CD8-positive, alpha-beta T cell (primary cell): ENCODE measurements at regions of chr7 and their contacts with region 1.

Region 1: GRCh38 chr7:27160546-27161213 is 4.2 kb upstream of the HOXA7 start:
- DNase-seq: peak; percentile 70 to 93 (median 87)
- ATAC-seq: peak; percentile 87
- H3K4me3 ChIP-seq: peak overlapping the region; percentile 63 to 79
- H3K4me3 Mint-ChIP-seq: peak overlapping the region; percentile 80
- H3K27ac ChIP-seq: no peak overlapping the region
- H3K27ac Mint-ChIP-seq: no peak overlapping the region
- H3K4me1 ChIP-seq: peaks cover 31% of the 10 kb centered on the region
- H3K4me1 Mint-ChIP-seq: peaks cover 41% of the 10 kb centered on the region
- H3K27me3 ChIP-seq: peaks cover 52 to 70% of the 10 kb centered on the region in 2 experiments
- H3K27me3 Mint-ChIP-seq: peaks cover 77% of the 10 kb centered on the region
- CTCF ChIP-seq: peak; percentile 97

Region 2: DNA sequence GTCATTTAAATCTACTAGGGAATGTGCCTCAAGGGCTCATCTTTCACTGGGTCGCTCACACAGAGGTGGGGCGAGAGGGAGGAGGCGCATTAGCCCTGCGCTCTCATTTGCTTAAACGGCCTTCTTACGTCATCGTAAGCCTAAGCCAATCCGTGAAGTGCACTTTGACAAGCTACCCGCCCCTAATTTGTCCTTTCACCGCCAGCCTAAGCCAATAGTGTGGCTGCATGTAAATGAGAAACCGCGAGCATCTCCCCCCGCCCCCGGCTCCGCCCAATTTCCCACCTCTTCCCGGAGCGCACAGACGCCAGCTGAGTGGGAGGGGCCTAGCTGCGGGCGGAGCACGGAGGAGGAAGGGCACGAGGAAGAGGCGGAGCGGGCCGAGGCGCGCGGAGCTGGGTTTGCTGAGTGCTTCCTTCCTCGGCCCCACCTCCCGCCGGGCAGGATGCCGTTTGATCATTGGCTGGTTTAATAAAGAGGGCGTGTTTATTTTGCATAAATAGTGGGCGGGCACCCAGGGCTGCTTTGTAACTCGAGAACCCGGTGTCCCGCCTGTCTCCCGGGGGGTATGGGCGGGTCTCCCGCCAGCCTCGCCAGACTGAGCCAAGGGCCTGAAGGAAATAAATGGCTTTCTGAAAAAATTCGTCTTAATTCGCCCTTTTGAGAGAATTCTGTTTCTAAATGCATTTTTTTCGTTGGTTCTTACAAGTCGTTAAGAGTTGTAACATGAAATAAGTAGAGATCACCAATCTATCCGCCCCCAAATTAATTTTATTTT is 1298.2 kb before region 1 on chr7:
- CTCF ChIA-PET with region 1: no interaction called
- POLR2A ChIA-PET with region 1: no interaction called
- intact Hi-C with region 1: loop called in 1 of 2 experiments (anchors 2 kb)
- DNase-seq: peak in 7 of 9 experiments; percentile 36 to 82 (median 53)
- ATAC-seq: peak; percentile 83
- H3K4me3 ChIP-seq: peak overlapping the region in 1 of 2 experiments; percentile 13
- H3K4me3 Mint-ChIP-seq: peak overlapping the region; percentile 11
- H3K27ac ChIP-seq: no peak overlapping the region
- H3K27ac Mint-ChIP-seq: no peak overlapping the region
- H3K4me1 ChIP-seq: peaks cover 14% of the 10 kb centered on the region
- H3K4me1 Mint-ChIP-seq: peaks cover 17% of the 10 kb centered on the region
- H3K27me3 ChIP-seq: peaks cover 64 to 84% of the 10 kb centered on the region in 2 experiments
- H3K27me3 Mint-ChIP-seq: peaks cover 69% of the 10 kb centered on the region
- CTCF ChIP-seq: no peak

Region 3: GRCh38 chr7:26078437-26079336 is 1082.0 kb before region 1 on chr7:
- CTCF ChIA-PET with region 1: interaction called, 5 read pairs
- POLR2A ChIA-PET with region 1: no interaction called
- intact Hi-C with region 1: loop called in 1 of 2 experiments (anchors 5 kb)
- DNase-seq: peak; percentile 65 to 88 (median 81)
- ATAC-seq: peak; percentile 100
- H3K4me3 ChIP-seq: peak overlapping the region in 1 of 2 experiments; percentile 18
- H3K4me3 Mint-ChIP-seq: no peak overlapping the region
- H3K27ac ChIP-seq: no peak overlapping the region
- H3K27ac Mint-ChIP-seq: no peak overlapping the region
- H3K4me1 ChIP-seq: peaks cover 4% of the 10 kb centered on the region
- H3K4me1 Mint-ChIP-seq: peaks cover 6% of the 10 kb centered on the region
- H3K27me3 ChIP-seq: peaks cover 0 to 8% of the 10 kb centered on the region in 2 experiments
- H3K27me3 Mint-ChIP-seq: peaks cover 19% of the 10 kb centered on the region
- CTCF ChIP-seq: peak; percentile 80

Region 4: GRCh38 chr7:26686448-26686981 is 474.2 kb before region 1 on chr7:
- CTCF ChIA-PET with region 1: interaction called, 86 read pairs
- POLR2A ChIA-PET with region 1: interaction called, 4 read pairs
- intact Hi-C with region 1: loop called (anchors 1 kb)
- DNase-seq: peak in 3 of 9 experiments; percentile 5 to 59 (median 49)
- ATAC-seq: peak; percentile 38
- H3K4me3 ChIP-seq: no peak overlapping the region
- H3K4me3 Mint-ChIP-seq: no peak overlapping the region
- H3K27ac ChIP-seq: no peak overlapping the region
- H3K27ac Mint-ChIP-seq: no peak overlapping the region
- H3K4me1 ChIP-seq: no peaks in the 10 kb centered on the region
- H3K4me1 Mint-ChIP-seq: no peaks in the 10 kb centered on the region
- H3K27me3 ChIP-seq: no peaks in the 10 kb centered on the region
- H3K27me3 Mint-ChIP-seq: peaks cover 28% of the 10 kb centered on the region
- CTCF ChIP-seq: peak; percentile 89

Region 5: DNA sequence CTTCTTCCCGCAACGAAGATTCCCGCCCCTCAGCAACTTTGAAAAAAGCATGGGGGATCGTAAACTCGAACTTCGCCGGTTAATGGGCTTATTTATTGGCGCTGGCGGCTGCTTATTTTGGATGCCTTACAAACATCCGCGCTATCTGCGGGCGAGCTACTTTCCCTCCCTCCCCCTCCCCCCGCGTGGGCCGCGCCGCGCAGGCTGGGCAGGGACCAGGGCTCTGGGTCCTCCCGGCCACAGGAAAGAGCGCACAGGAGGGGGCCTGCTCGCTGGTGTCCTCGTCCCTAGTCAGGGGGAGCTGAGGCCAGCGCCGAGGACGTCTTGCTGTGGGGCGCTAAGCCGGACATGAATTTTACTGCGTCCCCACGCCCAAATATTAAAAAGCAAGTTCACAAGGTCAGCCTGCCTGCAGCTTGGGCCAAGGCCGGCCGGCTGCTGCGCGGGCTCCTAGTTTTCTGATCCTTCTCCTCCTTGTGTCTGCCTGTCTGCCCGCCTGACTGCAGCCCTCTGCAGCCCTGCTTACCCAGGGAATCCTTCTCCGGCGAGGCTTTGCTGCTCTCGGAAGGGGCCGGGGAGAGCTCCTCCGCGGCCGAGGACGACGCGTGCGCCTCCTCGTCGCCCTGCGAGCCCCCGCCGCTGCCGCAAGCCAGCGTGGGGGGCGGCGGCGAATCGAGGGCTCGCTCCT is 12.3 kb after region 1 on chr7:
- CTCF ChIA-PET with region 1: interaction called, 17 read pairs
- POLR2A ChIA-PET with region 1: no interaction called
- intact Hi-C with region 1: loop called in 1 of 2 experiments (anchors 2 kb)
- DNase-seq: peak in 1 of 9 experiments; percentile 56
- ATAC-seq: peak; percentile 34
- H3K4me3 ChIP-seq: peak overlapping the region; percentile 27 to 45
- H3K4me3 Mint-ChIP-seq: peak overlapping the region; percentile 47
- H3K27ac ChIP-seq: no peak overlapping the region
- H3K27ac Mint-ChIP-seq: no peak overlapping the region
- H3K4me1 ChIP-seq: peaks cover 34% of the 10 kb centered on the region
- H3K4me1 Mint-ChIP-seq: peaks cover 31% of the 10 kb centered on the region
- H3K27me3 ChIP-seq: peaks cover 58 to 65% of the 10 kb centered on the region in 2 experiments
- H3K27me3 Mint-ChIP-seq: peaks cover 62% of the 10 kb centered on the region
- CTCF ChIP-seq: no peak